Naive thymus-derived CD4-positive, alpha-beta T cell (primary cell): ENCODE measurements at regions of chr1 and their contacts with region 1.

Region 1: GRCh38 chr1:41416552-41417334 is 55.5 kb downstream of the FOXO6 start:
- DNase-seq: peak; percentile 10 to 65 (median 51)
- ATAC-seq: peak; percentile 77
- H3K4me3 ChIP-seq: no peak overlapping the region
- H3K4me3 Mint-ChIP-seq: no peak overlapping the region
- H3K27ac ChIP-seq: no peak overlapping the region
- H3K27ac Mint-ChIP-seq: no peak overlapping the region
- H3K4me1 ChIP-seq: no peaks in the 10 kb centered on the region
- H3K4me1 Mint-ChIP-seq: peaks cover 0 to 5% (median 0%) of the 10 kb centered on the region in 7 donors
- H3K27me3 ChIP-seq: no peaks in the 10 kb centered on the region
- H3K27me3 Mint-ChIP-seq: peaks cover 0 to 14% (median 4%) of the 10 kb centered on the region in 5 donors

Region 2: DNA sequence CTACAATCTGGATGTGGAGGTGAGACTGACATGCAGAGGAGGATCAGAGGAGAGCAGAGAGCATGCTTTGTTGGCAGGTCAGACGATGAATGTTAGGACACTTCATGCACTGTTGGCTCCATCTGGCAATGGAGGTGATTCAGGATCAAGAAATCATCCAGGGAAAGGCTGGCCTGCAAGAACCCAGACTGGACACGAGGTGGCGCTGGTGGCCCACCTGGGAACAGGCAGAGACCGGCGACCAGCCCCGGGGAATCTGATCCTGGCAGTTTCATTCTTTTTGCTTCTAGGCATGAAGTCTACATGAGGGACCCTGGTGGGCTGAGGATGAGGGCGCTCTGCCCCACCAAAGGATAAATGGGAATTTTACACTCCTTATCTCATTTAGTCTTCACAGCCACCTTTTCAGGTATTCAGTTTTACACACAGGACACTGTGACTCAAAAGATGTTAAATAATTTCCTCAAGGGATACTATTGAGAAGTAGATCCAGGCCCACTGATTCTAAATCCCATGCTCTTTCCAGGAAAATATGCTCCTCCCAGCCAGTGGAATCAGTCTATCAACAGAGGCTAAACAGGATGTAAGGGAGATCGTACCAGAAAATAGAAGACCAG is 148.5 kb before region 1 on chr1:
- CTCF ChIA-PET with region 1: interaction called, 4 read pairs
- POLR2A ChIA-PET with region 1: no interaction called
- intact Hi-C with region 1: loop called (anchors 1 kb)
- DNase-seq: peak; percentile 33 to 68 (median 59)
- ATAC-seq: peak; percentile 65
- H3K4me3 ChIP-seq: no peak overlapping the region
- H3K4me3 Mint-ChIP-seq: no peak overlapping the region
- H3K27ac ChIP-seq: no peak overlapping the region
- H3K27ac Mint-ChIP-seq: no peak overlapping the region
- H3K4me1 ChIP-seq: no peaks in the 10 kb centered on the region
- H3K4me1 Mint-ChIP-seq: peaks cover 0 to 6% (median 1%) of the 10 kb centered on the region in 7 donors
- H3K27me3 ChIP-seq: no peaks in the 10 kb centered on the region
- H3K27me3 Mint-ChIP-seq: peaks cover 0 to 13% (median 0%) of the 10 kb centered on the region in 5 donors

Region 3: GRCh38 chr1:41282679-41283317 is 133.9 kb before region 1 on chr1:
- CTCF ChIA-PET with region 1: interaction called, 6 read pairs
- POLR2A ChIA-PET with region 1: no interaction called
- intact Hi-C with region 1: loop called (anchors 1 to 5 kb)
- DNase-seq: peak in 4 of 9 donors; percentile 3 to 28 (median 10)
- ATAC-seq: peak; percentile 64
- H3K4me3 ChIP-seq: no peak overlapping the region
- H3K4me3 Mint-ChIP-seq: no peak overlapping the region
- H3K27ac ChIP-seq: no peak overlapping the region
- H3K27ac Mint-ChIP-seq: no peak overlapping the region
- H3K4me1 ChIP-seq: no peaks in the 10 kb centered on the region
- H3K4me1 Mint-ChIP-seq: peaks cover 0 to 8% (median 0%) of the 10 kb centered on the region in 7 donors
- H3K27me3 ChIP-seq: no peaks in the 10 kb centered on the region
- H3K27me3 Mint-ChIP-seq: peaks cover 21 to 49% (median 35%) of the 10 kb centered on the region in 5 donors

Region 4: DNA sequence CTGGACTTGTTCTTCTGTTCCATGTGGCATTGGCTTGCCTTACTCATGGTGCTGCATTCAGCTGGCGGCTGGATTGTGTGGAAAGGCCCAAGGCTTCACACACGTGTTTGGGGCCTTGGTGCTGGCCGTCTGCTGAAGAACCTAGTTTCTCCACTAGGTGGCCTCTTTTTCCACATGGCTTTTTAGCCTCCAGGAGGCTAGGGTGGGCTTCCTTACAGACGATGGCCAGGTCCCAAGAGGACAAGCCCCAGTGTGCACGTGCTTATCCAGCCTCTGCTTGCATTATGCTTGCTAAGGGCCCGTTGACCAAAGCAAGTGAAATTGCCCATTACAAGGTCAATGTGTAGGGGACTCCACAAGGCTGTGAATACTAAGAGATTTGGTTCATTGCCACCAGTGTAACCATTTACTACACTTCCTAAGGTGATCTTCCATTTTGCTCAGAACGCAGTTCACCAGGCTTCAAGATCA is 103.0 kb before region 1 on chr1:
- CTCF ChIA-PET with region 1: no interaction called
- POLR2A ChIA-PET with region 1: no interaction called
- intact Hi-C with region 1: loop called in 1 of 2 experiments (anchors 2 kb)
- DNase-seq: no peak
- ATAC-seq: peak; percentile 37
- H3K4me3 ChIP-seq: no peak overlapping the region
- H3K4me3 Mint-ChIP-seq: no peak overlapping the region
- H3K27ac ChIP-seq: no peak overlapping the region
- H3K27ac Mint-ChIP-seq: no peak overlapping the region
- H3K4me1 ChIP-seq: no peaks in the 10 kb centered on the region
- H3K4me1 Mint-ChIP-seq: peaks cover 0 to 5% (median 0%) of the 10 kb centered on the region in 7 donors
- H3K27me3 ChIP-seq: no peaks in the 10 kb centered on the region
- H3K27me3 Mint-ChIP-seq: peaks cover 0 to 12% (median 0%) of the 10 kb centered on the region in 5 donors

Region 5: GRCh38 chr1:41322835-41323627 is 93.7 kb before region 1 on chr1:
- CTCF ChIA-PET with region 1: interaction called, 3 read pairs
- POLR2A ChIA-PET with region 1: no interaction called
- intact Hi-C with region 1: loop called in 1 of 2 experiments (anchors 5 kb)
- DNase-seq: peak in 4 of 9 donors; percentile 5 to 13 (median 7)
- ATAC-seq: peak; percentile 57
- H3K4me3 ChIP-seq: no peak overlapping the region
- H3K4me3 Mint-ChIP-seq: no peak overlapping the region
- H3K27ac ChIP-seq: no peak overlapping the region
- H3K27ac Mint-ChIP-seq: no peak overlapping the region
- H3K4me1 ChIP-seq: no peaks in the 10 kb centered on the region
- H3K4me1 Mint-ChIP-seq: no peaks in the 10 kb centered on the region
- H3K27me3 ChIP-seq: no peaks in the 10 kb centered on the region
- H3K27me3 Mint-ChIP-seq: peaks cover 0 to 5% (median 4%) of the 10 kb centered on the region in 5 donors

Region 6: DNA sequence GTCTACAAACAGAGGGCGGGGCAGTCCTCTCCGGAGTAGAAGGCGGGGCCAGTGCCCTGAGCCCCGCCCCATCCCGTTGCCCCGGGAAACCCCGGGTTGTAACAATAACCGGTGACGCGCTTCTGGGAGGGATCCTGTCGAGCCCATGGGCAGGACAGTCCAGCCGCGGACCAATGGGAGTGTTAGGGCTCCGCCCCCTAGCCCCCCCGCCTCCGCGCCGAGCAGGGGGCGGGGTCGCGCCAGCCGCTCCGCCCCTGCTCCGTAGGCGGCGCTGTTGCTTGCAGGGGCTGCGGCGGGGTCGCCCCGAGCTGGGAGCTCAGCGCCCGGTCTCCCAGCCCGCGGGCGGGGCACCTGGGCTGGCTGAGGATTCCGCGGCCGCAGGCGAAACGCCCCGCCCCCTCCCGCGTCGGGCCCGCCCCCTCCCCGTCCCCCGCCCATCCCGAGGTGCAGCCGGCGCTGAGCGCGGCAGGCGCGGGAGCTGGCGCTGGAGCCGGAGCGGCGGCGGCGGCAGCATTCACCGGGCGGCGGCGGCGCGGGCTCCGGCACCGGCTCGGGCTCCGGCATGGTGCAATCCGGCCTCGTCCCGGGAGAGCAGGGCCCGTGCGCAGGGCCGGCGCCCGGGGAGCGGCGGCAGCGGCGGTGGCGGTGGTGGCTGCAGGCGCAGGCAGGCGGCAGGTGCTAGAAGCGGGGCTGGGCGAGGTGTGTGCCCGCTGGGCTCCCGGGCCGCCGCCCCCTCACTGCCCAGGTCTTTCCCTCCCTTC is 55.6 kb before region 1 on chr1 and contains the start of gene FOXO6:
- CTCF ChIA-PET with region 1: interaction called, 3 read pairs
- POLR2A ChIA-PET with region 1: no interaction called
- intact Hi-C with region 1: loop called in 1 of 2 experiments (anchors 1 kb)
- DNase-seq: peak; percentile 87 to 94 (median 91)
- ATAC-seq: peak; percentile 95
- H3K4me3 ChIP-seq: peak within 1 kb of the TSS; percentile 51
- H3K4me3 Mint-ChIP-seq: peak within 1 kb of the TSS; percentile 65 to 86 (median 80)
- H3K27ac ChIP-seq: peak within 1 kb of the TSS; percentile 25
- H3K27ac Mint-ChIP-seq: peak within 1 kb of the TSS in 7 of 9 donors; percentile 3 to 91 (median 73)
- H3K4me1 ChIP-seq: peaks cover 4 to 6% of the 10 kb centered on the region in 2 donors
- H3K4me1 Mint-ChIP-seq: peaks cover 4 to 28% (median 9%) of the 10 kb centered on the region in 7 donors
- H3K27me3 ChIP-seq: peaks cover 5 to 7% of the 10 kb centered on the region in 2 donors
- H3K27me3 Mint-ChIP-seq: peaks cover 10 to 58% (median 35%) of the 10 kb centered on the region in 5 donors
- total RNA-seq, gene FOXO6: 0.66 to 1.3 TPM in 2 of 5 experiments, not detected in the others

Region 7: DNA sequence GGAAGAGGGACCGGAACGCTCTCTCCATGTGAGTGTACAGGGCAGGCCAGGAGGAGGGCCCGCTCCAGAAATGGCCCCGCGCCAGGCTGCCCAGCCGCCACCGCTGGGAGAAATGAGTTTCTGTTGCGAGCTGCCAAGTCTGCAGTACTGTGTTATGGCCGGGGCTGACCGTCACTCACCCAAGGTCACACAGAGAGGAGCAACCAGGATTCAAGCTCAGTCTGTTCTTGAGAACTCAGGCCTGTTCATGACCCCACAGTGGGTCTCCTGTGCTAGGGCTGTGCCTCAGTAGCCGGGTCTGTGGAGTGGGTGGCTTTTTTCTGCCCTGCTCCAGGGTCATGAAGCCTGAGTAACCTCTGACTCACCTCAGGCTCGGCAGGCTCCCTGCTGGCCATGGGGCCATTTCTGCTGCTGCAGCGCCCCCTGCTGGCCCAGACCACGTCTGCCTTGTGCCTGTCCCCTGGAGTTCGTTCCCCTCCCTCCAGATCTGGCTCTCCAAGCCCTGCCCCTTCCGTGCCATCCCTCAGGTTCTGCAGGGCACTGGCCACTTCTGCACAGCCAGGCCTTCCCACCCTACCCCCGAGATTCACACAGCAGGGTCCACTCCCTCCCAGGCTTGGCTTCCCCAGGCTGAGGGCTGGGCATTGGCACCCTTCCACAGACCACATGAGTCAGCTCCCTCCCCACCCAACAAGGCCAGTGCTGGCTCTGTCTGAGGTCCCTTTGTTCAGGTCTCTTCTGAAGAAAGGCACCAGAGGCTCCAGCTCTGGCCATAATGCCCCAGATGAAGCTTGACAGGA is 15.9 kb after region 1 on chr1:
- CTCF ChIA-PET with region 1: no interaction called
- POLR2A ChIA-PET with region 1: no interaction called
- intact Hi-C with region 1: no loop called
- DNase-seq: peak; percentile 21 to 80 (median 52)
- ATAC-seq: peak; percentile 89
- H3K4me3 ChIP-seq: no peak overlapping the region
- H3K4me3 Mint-ChIP-seq: no peak overlapping the region
- H3K27ac ChIP-seq: no peak overlapping the region
- H3K27ac Mint-ChIP-seq: no peak overlapping the region
- H3K4me1 ChIP-seq: no peaks in the 10 kb centered on the region
- H3K4me1 Mint-ChIP-seq: peaks cover 0 to 8% (median 0%) of the 10 kb centered on the region in 7 donors
- H3K27me3 ChIP-seq: no peaks in the 10 kb centered on the region
- H3K27me3 Mint-ChIP-seq: peaks cover 14 to 41% (median 37%) of the 10 kb centered on the region in 5 donors

Region 8: GRCh38 chr1:41607808-41608207 is 191.1 kb after region 1 on chr1:
- CTCF ChIA-PET with region 1: no interaction called
- POLR2A ChIA-PET with region 1: no interaction called
- intact Hi-C with region 1: no loop called
- DNase-seq: no peak
- ATAC-seq: no peak
- H3K4me3 ChIP-seq: no peak overlapping the region
- H3K4me3 Mint-ChIP-seq: no peak overlapping the region
- H3K27ac ChIP-seq: no peak overlapping the region
- H3K27ac Mint-ChIP-seq: peak overlapping the region in 1 of 9 donors; percentile 38
- H3K4me1 ChIP-seq: no peaks in the 10 kb centered on the region
- H3K4me1 Mint-ChIP-seq: peaks cover 0 to 33% (median 0%) of the 10 kb centered on the region in 7 donors
- H3K27me3 ChIP-seq: no peaks in the 10 kb centered on the region
- H3K27me3 Mint-ChIP-seq: no peaks in the 10 kb centered on the region